Activated CD4-positive, alpha-beta T cell treated with anti-CD3 and anti-CD28 coated beads, Interleukin-2, amount 10 ng/mL, durations not matched to agents 24 days and 14 days (primary cell): ENCODE measurements at regions of chr1 and their contacts with region 1.

Region 1: DNA sequence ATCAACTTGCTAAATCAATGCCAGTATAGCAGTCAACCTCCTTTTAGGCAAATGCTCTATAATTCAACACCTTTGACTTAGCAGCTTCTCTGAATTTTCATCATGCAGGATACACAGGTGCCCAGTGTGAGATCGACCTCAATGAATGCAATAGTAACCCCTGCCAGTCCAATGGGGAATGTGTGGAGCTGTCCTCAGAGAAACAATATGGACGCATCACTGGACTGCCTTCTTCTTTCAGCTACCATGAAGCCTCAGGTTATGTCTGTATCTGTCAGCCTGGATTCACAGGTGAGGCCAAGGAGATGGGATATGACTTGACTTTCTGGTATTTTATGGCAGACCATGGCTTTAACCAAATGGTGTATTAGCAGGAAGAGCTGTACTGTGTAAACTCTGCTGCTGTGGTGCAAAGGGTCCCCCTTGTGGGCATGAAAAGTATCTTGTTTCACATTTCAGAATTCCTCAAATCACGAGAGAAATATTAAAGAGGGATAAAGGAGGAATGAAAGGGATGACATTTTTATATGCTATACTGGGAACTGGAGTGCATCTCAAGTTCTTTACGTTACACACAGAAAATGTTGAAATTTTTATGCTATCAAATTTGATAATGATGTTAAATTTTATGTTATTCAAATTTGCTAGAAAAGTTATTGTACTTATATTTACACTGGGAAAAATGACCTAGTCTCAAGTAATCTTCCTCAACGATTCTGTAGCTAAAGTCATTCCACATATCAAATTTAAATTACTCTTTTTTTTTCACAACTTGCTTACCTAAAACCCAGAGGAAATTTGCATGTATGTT is 88.9 kb downstream of the CRB1 start:
- DNase-seq: peak; percentile 74
- H3K4me3 Mint-ChIP-seq: no peak overlapping the region
- H3K27ac Mint-ChIP-seq: no peak overlapping the region
- H3K4me1 Mint-ChIP-seq: no peaks in the 10 kb centered on the region
- H3K27me3 Mint-ChIP-seq: no peaks in the 10 kb centered on the region

Region 2: DNA sequence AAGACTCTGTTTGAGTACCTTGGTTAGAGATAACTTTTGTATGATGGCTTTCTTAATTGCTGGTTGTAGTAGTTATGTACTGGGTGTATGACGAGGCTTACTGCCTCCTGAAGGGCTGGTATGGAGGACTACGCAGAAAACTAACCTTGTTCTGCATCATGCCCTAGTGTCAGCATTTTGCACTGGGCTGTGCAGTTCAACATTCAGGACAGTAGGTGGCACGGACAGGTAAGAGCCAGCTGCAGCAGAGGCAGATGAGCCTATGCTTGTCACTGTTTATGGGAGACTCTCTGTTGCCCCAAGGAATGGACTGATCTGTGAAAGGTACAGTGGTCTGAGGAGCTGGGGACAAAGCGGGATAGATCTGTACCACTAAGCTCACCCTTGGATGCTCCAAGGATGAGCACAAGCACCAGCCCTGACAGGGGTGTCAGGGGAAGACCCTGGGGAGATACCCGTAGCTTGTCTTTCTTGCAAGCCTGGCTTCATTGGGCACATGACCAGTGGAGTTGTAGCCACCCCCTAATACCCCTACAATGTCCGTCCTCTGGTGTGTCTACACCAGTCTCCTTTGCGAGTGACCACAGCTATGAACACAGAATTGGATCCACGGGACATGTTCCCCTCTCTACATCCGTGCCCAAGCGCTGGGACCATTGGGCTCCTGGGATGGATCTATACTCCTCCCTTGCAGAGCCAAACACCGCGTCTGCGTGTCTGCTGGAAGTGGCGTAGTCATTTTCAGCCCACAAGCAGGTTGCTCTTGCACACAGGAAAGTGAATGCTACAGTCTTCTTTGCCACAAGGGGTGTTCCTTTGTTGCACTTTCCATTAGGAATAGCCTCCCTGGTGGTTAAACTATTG is 633.4 kb before region 1 on chr1:
- intact Hi-C with region 1: loop called (anchors 1 kb)
- DNase-seq: peak; percentile 87
- H3K4me3 Mint-ChIP-seq: no peak overlapping the region
- H3K27ac Mint-ChIP-seq: no peak overlapping the region
- H3K4me1 Mint-ChIP-seq: no peaks in the 10 kb centered on the region
- H3K27me3 Mint-ChIP-seq: no peaks in the 10 kb centered on the region